ENCODE measurements at regions of chr6 and their contacts with region 1.

Region 1: DNA sequence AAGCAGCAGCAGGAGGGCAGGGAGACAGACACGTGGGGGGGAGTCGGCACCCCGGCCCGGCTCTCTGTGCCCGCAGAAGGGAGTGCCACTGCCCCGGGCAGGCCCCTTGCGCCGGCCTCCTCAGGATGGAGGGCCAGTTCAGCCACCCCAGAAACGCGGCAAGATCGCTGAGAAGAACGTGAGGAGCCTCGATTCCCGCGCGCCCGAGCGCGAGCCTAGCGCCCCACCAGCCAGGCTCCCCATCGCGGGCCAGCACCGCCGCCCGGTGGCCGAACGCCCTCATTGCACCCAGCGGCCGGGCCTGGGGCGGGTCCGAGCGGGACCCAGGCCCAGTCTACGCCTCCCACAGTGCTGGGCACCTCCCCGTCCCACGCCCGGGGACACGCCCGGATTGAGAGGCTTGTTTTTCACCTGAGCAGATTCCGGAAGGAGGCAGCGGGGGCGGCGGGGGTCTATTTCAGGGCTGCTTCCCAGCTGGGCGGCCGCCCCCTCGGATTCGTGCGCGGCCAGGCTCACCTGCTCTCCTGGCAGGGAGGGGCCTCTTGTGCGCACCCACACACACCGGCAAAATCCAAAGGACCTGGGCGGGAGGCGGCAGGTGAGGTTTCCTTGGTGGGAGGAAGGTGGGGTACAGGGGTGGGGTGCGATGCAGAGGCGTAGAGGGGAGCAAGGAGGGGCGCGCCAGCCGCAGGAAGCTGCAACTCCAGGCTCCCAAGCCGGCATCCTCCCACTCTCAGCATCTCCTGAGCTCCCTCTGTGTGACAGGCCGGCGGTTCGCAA is 9.0 kb upstream of the GRM4 start:
- DNase-seq: peak; percentile 70
- H3K4me3 ChIP-seq: peak overlapping the region; percentile 17 to 21
- H3K27ac ChIP-seq: no peak overlapping the region
- H3K4me1 ChIP-seq: no peaks in the 10 kb centered on the region
- H3K27me3 ChIP-seq: no peaks in the 10 kb centered on the region
- CTCF ChIP-seq: peak; percentile 88 to 98 (median 95)
- POLR2A ChIP-seq: no peak

Region 2: GRCh38 chr6:33579828-33580714 is 574.8 kb before region 1 on chr6 and contains the start of gene BAK1:
- intact Hi-C with region 1: loop called (anchors 10 kb)
- DNase-seq: peak; percentile 95
- H3K4me3 ChIP-seq: peak within 1 kb of the TSS; percentile 69 to 77
- H3K27ac ChIP-seq: peak within 1 kb of the TSS; percentile 82 to 91
- H3K4me1 ChIP-seq: peaks cover 30% of the 10 kb centered on the region
- H3K27me3 ChIP-seq: no peaks in the 10 kb centered on the region
- CTCF ChIP-seq: peak; percentile 24 to 43 (median 29)
- POLR2A ChIP-seq: peak; percentile 45
- total RNA-seq, gene BAK1: 13.1 to 14.8 TPM

Region 3: GRCh38 chr6:33751771-33752645 is 402.9 kb before region 1 on chr6:
- intact Hi-C with region 1: loop called (anchors 10 kb)
- DNase-seq: no peak
- H3K4me3 ChIP-seq: no peak overlapping the region
- H3K27ac ChIP-seq: no peak overlapping the region
- H3K4me1 ChIP-seq: peaks cover 6% of the 10 kb centered on the region
- H3K27me3 ChIP-seq: no peaks in the 10 kb centered on the region
- CTCF ChIP-seq: no peak
- POLR2A ChIP-seq: no peak

Region 4: DNA sequence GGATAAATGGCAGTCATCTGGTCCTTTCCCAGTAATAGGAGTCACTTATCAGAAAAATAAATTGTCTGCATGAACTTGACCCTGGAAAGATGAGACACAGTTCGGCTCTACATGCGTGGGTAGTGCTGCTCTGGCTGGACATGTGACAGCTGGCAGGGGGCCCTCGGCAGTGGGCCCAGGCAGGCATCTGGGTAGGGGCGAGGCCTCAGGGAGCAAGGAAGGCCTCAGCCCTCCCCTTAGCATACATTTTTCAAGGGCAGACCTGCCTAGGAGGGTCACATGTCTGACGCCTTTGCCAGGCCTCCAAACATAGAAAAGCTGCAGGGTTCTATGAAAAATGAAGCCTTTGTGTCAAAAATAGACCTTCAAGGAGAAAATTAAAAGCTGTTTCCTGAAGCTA is 554.5 kb after region 1 on chr6:
- intact Hi-C with region 1: no loop called
- DNase-seq: peak; percentile 90
- H3K4me3 ChIP-seq: no peak overlapping the region
- H3K27ac ChIP-seq: peak overlapping the region; percentile 72 to 78
- H3K4me1 ChIP-seq: peaks cover 18% of the 10 kb centered on the region
- H3K27me3 ChIP-seq: no peaks in the 10 kb centered on the region
- CTCF ChIP-seq: no peak
- POLR2A ChIP-seq: no peak

Measured in testis (tissue), 5 donors.